ENCODE measurements at regions of chr2 and their contacts with region 1.

Region 1: GRCh38 chr2:224127871-224128501 is 88.9 kb upstream of the SERPINE2 start:
- DNase-seq: no peak
- ATAC-seq: peak; percentile 39
- H3K4me3 ChIP-seq: no peak overlapping the region
- H3K27ac ChIP-seq: no peak overlapping the region
- H3K4me1 ChIP-seq: peaks cover 19% of the 10 kb centered on the region
- H3K27me3 ChIP-seq: peaks cover under 1 to 33% of the 10 kb centered on the region in 2 experiments
- CTCF ChIP-seq: no peak
- EP300 ChIP-seq: no peak
- POLR2A ChIP-seq: no peak
- RAD21 ChIP-seq: no peak

Region 2: DNA sequence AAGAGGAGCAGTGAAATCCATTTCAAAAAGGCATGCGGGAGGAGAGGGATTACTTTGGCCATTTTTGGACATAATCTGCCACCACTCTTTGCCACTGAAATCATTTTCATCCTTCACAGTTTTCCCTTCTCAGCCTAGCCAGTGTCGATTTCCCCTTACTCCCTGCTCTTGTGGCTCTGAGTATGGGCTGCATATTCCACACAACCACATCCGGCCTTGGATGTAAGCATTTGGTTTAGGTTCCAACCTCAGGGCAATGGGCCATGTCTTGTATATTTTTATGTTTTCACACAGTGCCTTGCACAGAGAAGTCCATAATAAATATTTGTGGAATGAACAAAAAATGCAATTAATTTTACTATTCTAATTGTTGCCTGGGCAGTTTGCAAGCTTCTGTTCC is 81.2 kb before region 1 on chr2:
- CTCF ChIA-PET with region 1: no interaction called
- POLR2A ChIA-PET with region 1: no interaction called
- in situ Hi-C with region 1: no loop called
- intact Hi-C with region 1: no loop called
- DNase-seq: no peak
- ATAC-seq: no peak
- H3K4me3 ChIP-seq: no peak overlapping the region
- H3K27ac ChIP-seq: no peak overlapping the region
- H3K4me1 ChIP-seq: 0 out of 2 replicates have a peak, but pooled peaks cover 6% of the 10 kb centered on the region
- H3K27me3 ChIP-seq: peaks cover 0 to 39% of the 10 kb centered on the region in 2 experiments; a peak in 4 of 5 replicates
- CTCF ChIP-seq: no peak
- EP300 ChIP-seq: no peak
- POLR2A ChIP-seq: no peak
- RAD21 ChIP-seq: no peak

Region 3: GRCh38 chr2:224169847-224170246 is 41.9 kb after region 1 on chr2:
- CTCF ChIA-PET with region 1: no interaction called
- POLR2A ChIA-PET with region 1: no interaction called
- in situ Hi-C with region 1: no loop called
- intact Hi-C with region 1: loop called (anchors 1 kb)
- DNase-seq: no peak
- ATAC-seq: no peak
- H3K4me3 ChIP-seq: no peak overlapping the region
- H3K27ac ChIP-seq: no peak overlapping the region
- H3K4me1 ChIP-seq: peaks cover 10% of the 10 kb centered on the region
- H3K27me3 ChIP-seq: peaks cover 0 to 5% of the 10 kb centered on the region in 2 experiments; a peak in 2 of 5 replicates
- CTCF ChIP-seq: no peak
- EP300 ChIP-seq: no peak
- POLR2A ChIP-seq: no peak
- RAD21 ChIP-seq: no peak

Region 4: GRCh38 chr2:224369028-224369632 is 241.1 kb after region 1 on chr2:
- CTCF ChIA-PET with region 1: no interaction called
- POLR2A ChIA-PET with region 1: no interaction called
- in situ Hi-C with region 1: no loop called
- intact Hi-C with region 1: no loop called
- DNase-seq: peak; percentile 45
- ATAC-seq: peak; percentile 76
- H3K4me3 ChIP-seq: no peak overlapping the region
- H3K27ac ChIP-seq: no peak overlapping the region
- H3K4me1 ChIP-seq: no peaks in the 10 kb centered on the region
- H3K27me3 ChIP-seq: peaks cover 2 to 6% of the 10 kb centered on the region in 2 experiments; a peak in 2 of 5 replicates
- CTCF ChIP-seq: peak; percentile 65
- EP300 ChIP-seq: no peak
- POLR2A ChIP-seq: no peak
- RAD21 ChIP-seq: no peak